CD8-positive, alpha-beta T cell (primary cell): ENCODE measurements at regions of chr6 and their contacts with region 1.

Region 1: GRCh38 chr6:28349892-28350737 is at the start of gene ZKSCAN3:
- DNase-seq: peak; percentile 57 to 88 (median 82)
- ATAC-seq: peak; percentile 99
- H3K4me3 ChIP-seq: peak within 1 kb of the TSS; percentile 69 to 81
- H3K4me3 Mint-ChIP-seq: peak within 1 kb of the TSS; percentile 98
- H3K27ac ChIP-seq: peak within 1 kb of the TSS; percentile 54 to 55
- H3K27ac Mint-ChIP-seq: peak within 1 kb of the TSS; percentile 95
- H3K4me1 ChIP-seq: peaks cover 15% of the 10 kb centered on the region
- H3K4me1 Mint-ChIP-seq: peaks cover 36% of the 10 kb centered on the region
- H3K27me3 ChIP-seq: peaks cover 0 to 3% of the 10 kb centered on the region in 2 experiments
- H3K27me3 Mint-ChIP-seq: peaks cover 12% of the 10 kb centered on the region
- CTCF ChIP-seq: no peak
- total RNA-seq, gene ZKSCAN3: 0.61 to 0.68 TPM

Region 2: DNA sequence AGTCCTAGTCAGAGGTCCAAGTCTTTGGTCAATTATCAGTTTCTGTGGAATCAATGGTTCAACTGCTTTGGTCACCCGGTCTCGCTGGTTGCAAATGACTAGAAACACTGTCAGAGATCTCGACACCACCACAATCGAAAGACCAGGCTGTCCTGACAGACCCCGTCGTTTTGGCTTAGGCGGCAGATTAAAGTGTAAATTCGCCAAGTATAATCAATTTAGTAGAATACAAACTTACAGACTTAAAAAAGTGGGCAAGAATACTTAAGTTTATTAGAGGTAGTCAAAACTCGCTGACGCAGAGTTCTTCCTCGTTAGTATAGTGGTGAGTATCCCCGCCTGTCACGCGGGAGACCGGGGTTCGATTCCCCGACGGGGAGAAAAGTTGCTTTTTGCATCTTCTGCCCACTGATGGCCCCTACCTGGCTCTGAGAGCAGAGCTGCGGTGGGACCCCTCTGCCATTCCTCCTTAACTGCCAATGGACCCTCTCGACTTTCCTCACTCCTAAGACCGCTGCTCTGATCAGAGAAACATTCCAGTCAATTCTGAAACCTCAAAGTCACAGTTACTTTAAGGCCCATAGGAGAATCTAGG is 846.6 kb before region 1 on chr6:
- CTCF ChIA-PET with region 1: no interaction called
- POLR2A ChIA-PET with region 1: no interaction called
- intact Hi-C with region 1: no loop called
- DNase-seq: peak; percentile 58 to 90 (median 79)
- ATAC-seq: peak; percentile 62
- H3K4me3 ChIP-seq: peak overlapping the region; percentile 61 to 70
- H3K4me3 Mint-ChIP-seq: peak overlapping the region; percentile 94
- H3K27ac ChIP-seq: peak overlapping the region; percentile 34 to 46
- H3K27ac Mint-ChIP-seq: peak overlapping the region; percentile 90
- H3K4me1 ChIP-seq: peaks cover 11% of the 10 kb centered on the region
- H3K4me1 Mint-ChIP-seq: peaks cover 38% of the 10 kb centered on the region
- H3K27me3 ChIP-seq: peaks cover 0 to 7% of the 10 kb centered on the region in 2 experiments
- H3K27me3 Mint-ChIP-seq: peaks cover 4% of the 10 kb centered on the region
- CTCF ChIP-seq: no peak

Region 3: GRCh38 chr6:28235912-28236452 is 114.1 kb before region 1 on chr6:
- CTCF ChIA-PET with region 1: no interaction called
- POLR2A ChIA-PET with region 1: no interaction called
- intact Hi-C with region 1: no loop called
- DNase-seq: no peak
- ATAC-seq: no peak
- H3K4me3 ChIP-seq: no peak overlapping the region
- H3K4me3 Mint-ChIP-seq: no peak overlapping the region
- H3K27ac ChIP-seq: no peak overlapping the region
- H3K27ac Mint-ChIP-seq: no peak overlapping the region
- H3K4me1 ChIP-seq: no peaks in the 10 kb centered on the region
- H3K4me1 Mint-ChIP-seq: no peaks in the 10 kb centered on the region
- H3K27me3 ChIP-seq: no peaks in the 10 kb centered on the region
- H3K27me3 Mint-ChIP-seq: peaks cover 5% of the 10 kb centered on the region
- CTCF ChIP-seq: no peak

Region 4: GRCh38 chr6:28315628-28316027 is 34.5 kb before region 1 on chr6:
- CTCF ChIA-PET with region 1: no interaction called
- POLR2A ChIA-PET with region 1: no interaction called
- intact Hi-C with region 1: loop called in 1 of 2 experiments (anchors 1 kb)
- DNase-seq: no peak
- ATAC-seq: no peak
- H3K4me3 ChIP-seq: no peak overlapping the region
- H3K4me3 Mint-ChIP-seq: no peak overlapping the region
- H3K27ac ChIP-seq: no peak overlapping the region
- H3K27ac Mint-ChIP-seq: no peak overlapping the region
- H3K4me1 ChIP-seq: no peaks in the 10 kb centered on the region
- H3K4me1 Mint-ChIP-seq: no peaks in the 10 kb centered on the region
- H3K27me3 ChIP-seq: no peaks in the 10 kb centered on the region
- H3K27me3 Mint-ChIP-seq: peaks cover 15% of the 10 kb centered on the region
- CTCF ChIP-seq: no peak

Region 5: DNA sequence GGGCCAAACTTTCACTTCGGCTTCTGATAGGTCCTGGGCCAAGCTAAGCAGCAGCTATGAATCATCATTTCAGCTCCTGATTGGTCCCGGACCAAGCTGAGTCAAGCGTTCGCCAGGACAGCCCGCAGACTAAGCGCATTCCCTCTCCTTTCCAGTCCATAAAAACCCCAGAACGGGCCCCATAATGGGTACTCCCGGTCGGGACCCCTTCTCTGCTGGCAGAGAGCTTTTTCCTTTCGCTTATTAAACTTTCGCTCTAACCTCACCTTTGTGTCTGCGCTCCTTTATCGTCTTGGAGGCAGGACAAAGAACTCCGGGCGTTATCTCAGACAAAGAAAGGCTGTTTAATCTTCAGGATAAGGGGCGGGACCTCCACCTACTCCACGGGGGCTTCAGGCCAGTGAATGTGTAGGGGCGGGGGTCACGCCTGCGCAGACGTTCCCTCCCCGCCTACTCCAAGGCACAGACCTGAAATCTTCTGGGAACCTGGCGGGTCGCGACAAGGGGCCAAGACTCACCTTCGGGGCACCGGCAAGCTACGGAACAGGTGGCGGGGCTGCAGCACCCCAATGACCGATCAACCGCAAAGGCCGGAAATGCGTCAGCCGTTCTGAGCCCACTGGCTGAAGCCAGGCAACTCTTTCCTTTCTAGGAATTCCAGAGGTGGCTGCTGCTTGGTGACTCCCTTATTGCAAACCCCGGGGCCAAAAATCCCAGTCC is 14.4 kb before region 1 on chr6 and contains the start of gene ZSCAN31:
- CTCF ChIA-PET with region 1: interaction called, 3 read pairs
- POLR2A ChIA-PET with region 1: interaction called, 9 read pairs
- intact Hi-C with region 1: loop called in 1 of 2 experiments (anchors 1 kb)
- DNase-seq: peak; percentile 64 to 94 (median 80)
- ATAC-seq: peak; percentile 86
- H3K4me3 ChIP-seq: peak within 1 kb of the TSS; percentile 77 to 85
- H3K4me3 Mint-ChIP-seq: no peak within 1 kb of the TSS
- H3K27ac ChIP-seq: peak within 1 kb of the TSS; percentile 94 to 96
- H3K27ac Mint-ChIP-seq: no peak within 1 kb of the TSS
- H3K4me1 ChIP-seq: peaks cover 15% of the 10 kb centered on the region
- H3K4me1 Mint-ChIP-seq: peaks cover 9% of the 10 kb centered on the region
- H3K27me3 ChIP-seq: no peaks in the 10 kb centered on the region
- H3K27me3 Mint-ChIP-seq: no peaks in the 10 kb centered on the region
- CTCF ChIP-seq: no peak
- total RNA-seq, gene ZSCAN31: 1.4 to 1.9 TPM